HEK293 (cell line): ENCODE measurements at regions of chr15 and their contacts with region 1.

Region 1: GRCh38 chr15:72136170-72137051 is 18.2 kb downstream of the SENP8 start:
- H3K4me3 ChIP-seq: no peak overlapping the region
- H3K27ac ChIP-seq: peak overlapping the region; percentile 44
- H3K4me1 ChIP-seq: peaks cover 41% of the 10 kb centered on the region
- CTCF ChIP-seq: no peak

Region 2: GRCh38 chr15:72117486-72118399 is 18.7 kb before region 1 on chr15 and contains the start of gene MYO9A:
- CTCF ChIA-PET with region 1: interaction called, 3 read pairs
- POLR2A ChIA-PET with region 1: interaction called, 10 read pairs
- H3K4me3 ChIP-seq: peak within 1 kb of the TSS; percentile 98
- H3K27ac ChIP-seq: peak within 1 kb of the TSS; percentile 96
- H3K4me1 ChIP-seq: peaks cover 31% of the 10 kb centered on the region
- CTCF ChIP-seq: peak; percentile 63